ENCODE measurements at regions of chr18 and their contacts with region 1.

Region 1: GRCh38 chr18:59268721-59269562 is 4.3 kb downstream of the RAX start:
- DNase-seq: peak; percentile 14
- H3K4me3 Mint-ChIP-seq: peak overlapping the region; percentile 49
- H3K27ac Mint-ChIP-seq: no peak overlapping the region
- H3K4me1 Mint-ChIP-seq: peaks cover 13% of the 10 kb centered on the region
- H3K27me3 Mint-ChIP-seq: peaks cover 74% of the 10 kb centered on the region

Region 2: DNA sequence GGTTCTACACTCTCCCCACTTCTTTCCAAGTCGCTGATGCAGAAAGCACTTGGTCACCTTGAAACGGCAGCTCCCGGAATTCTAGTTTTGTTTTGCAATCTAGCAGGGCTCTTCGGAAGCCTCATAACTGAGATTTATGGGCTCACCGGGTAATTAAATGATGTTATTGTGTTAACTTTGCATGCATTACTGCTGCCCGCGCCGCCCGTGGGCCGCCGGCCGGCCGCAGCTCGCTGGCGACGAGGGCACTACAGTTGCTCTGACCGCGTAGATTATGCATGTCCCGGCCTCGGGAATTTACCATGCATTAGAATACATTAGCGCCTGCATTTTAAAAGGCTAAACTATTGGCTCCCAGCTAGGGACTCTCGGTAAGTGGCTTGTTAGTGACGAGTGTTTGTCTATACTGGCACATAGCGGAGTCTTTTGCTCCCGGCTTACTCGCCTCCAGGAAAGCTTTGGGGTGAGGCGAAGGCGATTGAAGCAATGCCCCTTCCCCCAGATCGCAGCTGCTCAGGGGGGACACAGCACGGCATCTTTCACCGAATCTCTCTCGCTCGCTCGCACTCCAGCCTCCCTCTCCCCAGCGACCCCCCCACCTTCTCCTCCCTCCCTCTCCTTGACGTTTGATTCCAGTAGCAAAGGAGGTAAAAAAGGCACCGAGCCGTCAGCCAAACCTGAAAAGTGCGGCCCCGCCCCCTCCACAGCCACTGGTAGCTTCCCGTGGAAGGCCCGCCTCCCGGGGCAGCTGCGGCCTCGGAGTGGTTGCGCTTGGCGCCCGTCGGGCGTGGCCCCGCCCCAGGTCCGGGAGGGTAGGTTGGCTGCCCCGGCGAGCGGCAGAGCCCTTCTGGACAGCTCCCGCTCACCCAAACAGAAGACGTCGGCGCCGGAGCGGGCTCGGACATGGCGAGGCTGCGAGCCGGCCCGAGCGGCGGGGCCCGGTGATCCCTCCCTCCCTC is 1834.1 kb before region 1 on chr18 and contains the start of gene ONECUT2:
- intact Hi-C with region 1: loop called (anchors 2 kb)
- DNase-seq: peak; percentile 23
- H3K4me3 Mint-ChIP-seq: no peak within 1 kb of the TSS
- H3K27ac Mint-ChIP-seq: peak within 1 kb of the TSS; percentile 63
- H3K4me1 Mint-ChIP-seq: peaks cover 9% of the 10 kb centered on the region
- H3K27me3 Mint-ChIP-seq: peaks cover 82% of the 10 kb centered on the region
- total RNA-seq, gene ONECUT2: under 0.01 TPM in 1 of 2 replicates, not detected in the other

Region 3: GRCh38 chr18:57803103-57803969 is 1465.6 kb before region 1 on chr18 and contains the start of gene ATP8B1:
- intact Hi-C with region 1: loop called (anchors 10 kb)
- DNase-seq: no peak
- H3K4me3 Mint-ChIP-seq: peak within 1 kb of the TSS; percentile 72
- H3K27ac Mint-ChIP-seq: peak within 1 kb of the TSS; percentile 61
- H3K4me1 Mint-ChIP-seq: peaks cover 11% of the 10 kb centered on the region
- H3K27me3 Mint-ChIP-seq: peaks cover 67% of the 10 kb centered on the region
- total RNA-seq, gene ATP8B1: 0.05 and 0.16 TPM in 2 replicates

Region 4: GRCh38 chr18:59085797-59086196 is 183.1 kb before region 1 on chr18:
- intact Hi-C with region 1: loop called (anchors 1 kb)
- DNase-seq: no peak
- H3K4me3 Mint-ChIP-seq: no peak overlapping the region
- H3K27ac Mint-ChIP-seq: no peak overlapping the region
- H3K4me1 Mint-ChIP-seq: peaks cover 5% of the 10 kb centered on the region
- H3K27me3 Mint-ChIP-seq: peaks cover 14% of the 10 kb centered on the region

Region 5: DNA sequence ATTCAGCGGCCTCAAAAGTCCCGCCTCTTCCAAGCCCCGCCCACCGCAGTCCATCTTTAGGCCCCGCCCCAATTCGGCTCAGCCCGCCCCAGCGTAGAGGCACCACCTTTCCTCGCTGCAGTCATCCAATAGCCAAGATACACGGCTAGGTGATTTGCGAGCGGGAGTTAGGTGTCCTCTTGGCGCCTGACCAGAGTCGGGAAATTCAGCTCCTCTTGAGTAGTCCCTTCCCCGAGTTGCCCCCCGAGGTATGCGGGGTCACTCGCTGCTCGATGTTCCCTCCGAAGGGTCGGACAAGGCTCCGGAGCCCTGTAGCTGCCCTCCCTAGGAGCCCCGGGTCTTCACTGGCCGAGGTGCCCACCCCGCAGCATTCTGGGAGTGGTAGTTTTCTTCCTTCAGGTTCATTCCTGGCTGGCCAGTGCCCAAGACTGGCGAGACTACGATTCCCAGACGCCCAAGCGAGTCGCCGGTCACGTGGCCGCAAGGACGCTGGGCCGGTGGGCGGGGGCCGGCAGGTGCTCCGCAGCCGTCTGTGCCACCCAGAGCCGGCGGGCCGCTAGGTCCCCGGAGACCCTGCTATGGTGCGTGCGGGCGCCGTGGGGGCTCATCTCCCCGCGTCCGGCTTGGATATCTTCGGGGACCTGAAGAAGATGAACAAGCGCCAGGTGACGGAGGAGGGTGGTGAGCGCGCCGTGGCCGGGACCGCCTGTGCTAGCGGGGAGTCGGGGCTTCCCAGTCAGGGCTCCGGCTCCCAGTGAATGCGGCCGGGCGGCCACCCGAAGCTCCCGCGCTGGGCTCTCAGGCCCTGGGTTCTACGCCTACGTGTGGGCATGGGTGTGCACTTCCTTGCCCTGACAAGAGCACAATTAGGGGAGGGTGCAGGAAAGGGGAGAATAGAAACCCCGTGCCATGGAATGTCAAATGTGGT is 129.3 kb before region 1 on chr18 and contains the start of gene SEC11C:
- intact Hi-C with region 1: loop called (anchors 5 kb)
- DNase-seq: peak; percentile 96
- H3K4me3 Mint-ChIP-seq: peak within 1 kb of the TSS; percentile 94
- H3K27ac Mint-ChIP-seq: peak within 1 kb of the TSS; percentile 98
- H3K4me1 Mint-ChIP-seq: peaks cover 34% of the 10 kb centered on the region
- H3K27me3 Mint-ChIP-seq: peaks cover 19% of the 10 kb centered on the region
- total RNA-seq, gene SEC11C: 147 and 148 TPM in 2 replicates

Region 6: GRCh38 chr18:59220784-59221765 is 47.9 kb before region 1 on chr18:
- intact Hi-C with region 1: loop called (anchors 2 kb)
- DNase-seq: no peak
- H3K4me3 Mint-ChIP-seq: no peak overlapping the region
- H3K27ac Mint-ChIP-seq: no peak overlapping the region
- H3K4me1 Mint-ChIP-seq: no peaks in the 10 kb centered on the region
- H3K27me3 Mint-ChIP-seq: peaks cover 61% of the 10 kb centered on the region

Region 7: GRCh38 chr18:59697236-59697932 is 428.4 kb after region 1 on chr18 and contains the start of gene CCBE1:
- intact Hi-C with region 1: loop called (anchors 5 kb)
- DNase-seq: peak; percentile 22
- H3K4me3 Mint-ChIP-seq: peak within 1 kb of the TSS; percentile 23
- H3K27ac Mint-ChIP-seq: no peak within 1 kb of the TSS
- H3K4me1 Mint-ChIP-seq: peaks cover 5% of the 10 kb centered on the region
- H3K27me3 Mint-ChIP-seq: peaks cover 65% of the 10 kb centered on the region
- total RNA-seq, gene CCBE1: 0.02 TPM in 1 of 2 replicates, not detected in the other